Activated CD4-positive, alpha-beta T cell treated with anti-CD3 and anti-CD28 coated beads for 36 hours (primary cell): ENCODE measurements at regions of chr19 and their contacts with region 1.

Region 1: GRCh38 chr19:11355160-11356073 is at the start of gene PLPPR2:
- DNase-seq: peak; percentile 92
- ATAC-seq: peak; percentile 95
- H3K4me3 Mint-ChIP-seq: peak within 1 kb of the TSS; percentile 43
- H3K27ac Mint-ChIP-seq: peak within 1 kb of the TSS; percentile 23
- H3K4me1 Mint-ChIP-seq: peaks cover 7% of the 10 kb centered on the region
- H3K27me3 Mint-ChIP-seq: peaks cover 13% of the 10 kb centered on the region
- total RNA-seq, gene PLPPR2: 2.1 to 2.2 TPM

Region 2: DNA sequence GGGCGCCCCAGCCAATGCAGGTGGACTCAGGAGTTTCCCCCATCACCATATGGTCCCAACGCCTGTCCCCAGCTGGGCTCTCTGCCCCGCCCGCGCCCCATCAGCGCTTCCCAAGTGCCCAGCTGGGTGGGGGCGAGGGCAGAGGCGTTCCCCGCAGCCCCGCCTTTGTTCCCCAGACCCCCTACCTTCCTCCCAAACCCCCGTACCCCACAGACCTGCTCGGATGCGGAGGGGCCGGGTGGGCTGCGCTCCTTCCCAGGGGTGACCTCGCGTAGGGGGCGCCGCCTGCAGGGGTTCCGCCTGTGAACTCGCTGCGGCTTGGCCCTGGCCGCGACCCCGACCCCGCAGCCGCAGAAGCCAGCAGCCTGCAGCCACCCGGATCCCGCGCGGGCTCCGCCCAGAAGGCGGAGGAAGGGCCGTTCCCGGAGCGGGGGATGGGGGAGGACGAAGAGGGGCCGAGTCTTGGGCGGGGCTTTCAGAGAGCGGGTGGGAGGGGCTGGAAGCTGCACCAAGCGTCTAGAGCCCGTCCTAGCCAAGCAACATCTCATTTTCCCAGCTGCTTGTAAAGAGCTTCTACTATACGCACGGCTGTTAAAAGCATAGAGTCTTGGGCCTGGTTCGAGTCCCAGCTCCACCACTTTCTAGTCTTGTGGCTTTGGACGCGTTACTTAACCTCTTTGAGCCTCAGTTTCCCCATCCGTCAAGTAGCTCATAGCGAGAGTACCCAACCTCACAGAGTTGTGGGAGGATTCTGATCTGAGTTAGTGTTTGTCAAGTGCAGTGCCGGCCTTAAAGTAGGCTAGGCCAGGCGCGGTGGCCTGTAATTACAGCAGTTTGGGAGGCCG is 15.9 kb before region 1 on chr19 and contains the start of gene RAB3D:
- CTCF ChIA-PET with region 1: no interaction called
- POLR2A ChIA-PET with region 1: no interaction called
- intact Hi-C with region 1: loop called in 1 of 2 experiments (anchors 1 kb)
- DNase-seq: peak; percentile 93
- ATAC-seq: peak; percentile 99
- H3K4me3 Mint-ChIP-seq: peak within 1 kb of the TSS; percentile 72
- H3K27ac Mint-ChIP-seq: no peak within 1 kb of the TSS
- H3K4me1 Mint-ChIP-seq: peaks cover 23% of the 10 kb centered on the region
- H3K27me3 Mint-ChIP-seq: no peaks in the 10 kb centered on the region
- total RNA-seq, gene RAB3D: 7.5 to 8.9 TPM

Region 3: DNA sequence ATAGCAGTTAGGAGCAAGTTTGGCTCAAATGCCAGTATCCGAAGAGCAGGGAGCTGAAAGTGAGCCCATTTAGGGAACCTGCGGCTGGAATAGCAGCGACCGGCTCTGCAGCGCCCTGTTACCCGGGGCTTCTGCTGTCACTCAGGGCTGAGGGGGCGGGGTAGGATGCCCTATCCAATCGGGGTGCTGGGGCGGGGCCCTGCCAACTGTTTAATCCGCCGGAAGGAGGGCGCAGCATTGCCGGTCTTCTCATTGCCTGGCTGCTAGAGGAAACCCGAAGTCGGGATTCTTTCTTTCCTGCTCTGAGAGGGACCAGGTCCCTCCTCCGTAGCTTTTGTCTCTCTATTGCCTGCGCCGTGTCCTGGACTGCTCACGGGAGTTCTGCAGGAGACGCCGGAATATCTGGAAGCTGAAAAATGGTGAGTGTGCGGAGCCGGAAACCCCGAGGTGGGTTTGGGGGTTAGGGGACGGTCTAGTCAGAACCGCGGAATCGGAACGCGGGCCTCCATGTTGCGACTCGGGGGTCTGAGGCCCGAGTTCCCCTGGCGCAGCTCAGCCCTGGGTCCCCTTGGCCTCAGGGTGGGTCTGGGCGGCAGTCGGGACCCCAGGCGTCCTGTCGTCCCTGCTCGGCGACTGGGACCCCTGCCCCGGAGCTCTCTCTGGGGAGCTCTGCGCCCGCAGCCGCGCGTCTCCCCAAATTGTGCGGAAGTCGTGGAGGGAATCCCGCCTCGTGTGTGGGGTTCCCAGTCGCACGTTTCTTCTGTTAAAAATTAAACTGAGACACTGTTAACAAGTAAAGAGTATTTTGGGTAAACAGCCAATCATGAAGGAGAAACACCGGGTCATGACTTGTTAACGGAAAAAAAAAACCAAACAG is 632.2 kb after region 1 on chr19:
- CTCF ChIA-PET with region 1: no interaction called
- POLR2A ChIA-PET with region 1: no interaction called
- intact Hi-C with region 1: no loop called
- DNase-seq: peak; percentile 98
- ATAC-seq: peak; percentile 98
- H3K4me3 Mint-ChIP-seq: peak overlapping the region; percentile 86
- H3K27ac Mint-ChIP-seq: peak overlapping the region; percentile 92
- H3K4me1 Mint-ChIP-seq: peaks cover 18% of the 10 kb centered on the region
- H3K27me3 Mint-ChIP-seq: no peaks in the 10 kb centered on the region